GM12878 (cell line): ENCODE measurements at regions of chr2 and their contacts with region 1.

Region 1: DNA sequence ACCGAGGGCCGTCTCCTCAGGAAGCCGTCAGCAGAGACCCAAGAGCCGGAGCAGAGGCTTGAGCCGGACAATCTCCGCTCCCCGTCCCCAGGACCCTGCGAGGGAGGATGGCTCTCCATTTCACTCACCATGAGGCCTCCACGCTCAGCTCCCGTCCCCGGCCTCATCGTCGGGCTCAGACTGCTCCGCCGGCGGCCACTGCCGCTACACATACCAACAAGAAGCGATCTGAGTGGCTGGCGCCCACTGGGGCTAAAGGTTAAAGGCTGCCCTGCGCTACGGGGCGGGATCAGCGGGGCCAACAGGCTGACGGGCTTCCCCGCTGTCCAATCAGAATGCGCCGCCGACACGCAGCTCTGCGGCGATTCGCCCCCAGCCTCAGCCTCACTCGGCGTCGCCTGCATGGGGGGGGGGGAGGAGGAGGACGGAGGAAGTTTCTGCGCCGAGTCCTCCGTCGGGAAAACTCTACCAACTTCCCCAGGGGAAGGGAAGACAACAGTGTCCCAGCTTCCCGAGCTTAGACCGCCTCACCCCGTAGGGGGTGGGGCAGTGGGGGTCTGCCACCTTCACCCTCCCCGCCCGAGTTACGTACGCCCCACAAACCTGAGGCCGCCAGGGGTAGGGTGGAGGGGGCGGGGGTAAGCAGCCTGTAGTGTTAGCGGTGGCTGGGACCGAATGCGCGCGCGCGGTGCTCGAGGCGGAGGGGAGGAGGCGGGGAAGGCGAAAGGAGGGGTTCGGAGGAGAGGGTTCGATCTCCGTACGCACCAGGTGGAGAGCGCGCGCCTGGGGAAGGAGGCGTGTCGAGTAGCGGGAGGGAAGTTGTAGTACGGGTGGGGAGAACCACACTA is at the start of gene PRPF40A:
- DNase-seq: peak; percentile 92
- ATAC-seq: peak; percentile 82
- H3K4me3 ChIP-seq: peak within 1 kb of the TSS; percentile 81
- H3K27ac ChIP-seq: peak within 1 kb of the TSS; percentile 95
- H3K4me1 ChIP-seq: no peaks in the 10 kb centered on the region
- H3K27me3 ChIP-seq: no peaks in the 10 kb centered on the region
- CTCF ChIP-seq: no peak
- EP300 ChIP-seq: peak in 1 of 2 experiments; percentile 16; a peak in 1 of 4 replicates
- POLR2A ChIP-seq: peak; percentile 93
- RAD21 ChIP-seq: no peak
- polyA plus RNA-seq, gene PRPF40A: 97.8 to 117 TPM

Region 2: DNA sequence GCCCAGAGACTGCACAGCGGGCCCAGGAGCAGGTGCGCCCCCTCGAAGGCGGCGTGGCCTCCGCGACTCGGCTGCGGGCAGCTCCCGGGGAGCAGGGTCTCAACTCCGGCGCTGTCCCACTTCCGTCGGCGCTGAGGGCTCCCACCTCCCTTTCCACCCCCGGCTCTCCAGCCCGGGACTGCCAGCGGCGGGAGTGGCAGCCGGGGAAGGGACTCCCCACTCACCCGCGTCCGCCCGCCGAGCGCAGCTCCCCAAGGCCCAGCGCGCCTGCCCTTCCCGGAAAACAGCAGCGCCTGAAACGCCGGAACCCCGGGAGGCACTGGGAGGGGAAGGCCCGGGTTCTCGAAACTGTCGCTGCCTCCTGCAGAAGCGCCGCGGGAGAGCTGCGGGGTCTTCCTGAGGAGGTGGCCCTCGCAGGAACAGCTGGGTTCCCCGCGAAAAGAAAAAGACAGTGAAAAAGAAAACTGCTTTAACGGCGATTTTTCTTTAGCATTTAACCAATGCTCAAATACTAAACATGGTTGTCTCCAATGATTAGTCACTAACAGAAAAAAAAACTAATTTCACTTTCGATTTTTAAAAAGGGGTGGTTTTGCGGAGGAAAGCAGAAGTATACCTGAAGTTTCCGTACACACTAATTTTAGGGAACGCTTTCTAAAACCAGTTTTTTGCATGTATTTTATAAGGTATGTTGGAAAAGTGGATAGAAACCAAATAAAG is 1427.9 kb before region 1 on chr2 and contains the start of gene NMI:
- CTCF ChIA-PET with region 1: no interaction called
- POLR2A ChIA-PET with region 1: no interaction called
- RAD21 ChIA-PET with region 1: no interaction called
- SMC1A ChIA-PET with region 1: no interaction called
- in situ Hi-C with region 1: loop called (anchors 25 kb)
- intact Hi-C with region 1: loop called (anchors 10 kb)
- DNase-seq: peak; percentile 76
- ATAC-seq: peak; percentile 74
- H3K4me3 ChIP-seq: peak within 1 kb of the TSS; percentile 86
- H3K27ac ChIP-seq: peak within 1 kb of the TSS; percentile 98
- H3K4me1 ChIP-seq: peaks cover 4% of the 10 kb centered on the region; the same call in 1 of the 2 replicates
- H3K27me3 ChIP-seq: no peaks in the 10 kb centered on the region
- CTCF ChIP-seq: no peak
- EP300 ChIP-seq: no peak
- POLR2A ChIP-seq: peak; percentile 81
- RAD21 ChIP-seq: no peak
- polyA plus RNA-seq, gene NMI: 43.3 to 48.4 TPM

Region 3: DNA sequence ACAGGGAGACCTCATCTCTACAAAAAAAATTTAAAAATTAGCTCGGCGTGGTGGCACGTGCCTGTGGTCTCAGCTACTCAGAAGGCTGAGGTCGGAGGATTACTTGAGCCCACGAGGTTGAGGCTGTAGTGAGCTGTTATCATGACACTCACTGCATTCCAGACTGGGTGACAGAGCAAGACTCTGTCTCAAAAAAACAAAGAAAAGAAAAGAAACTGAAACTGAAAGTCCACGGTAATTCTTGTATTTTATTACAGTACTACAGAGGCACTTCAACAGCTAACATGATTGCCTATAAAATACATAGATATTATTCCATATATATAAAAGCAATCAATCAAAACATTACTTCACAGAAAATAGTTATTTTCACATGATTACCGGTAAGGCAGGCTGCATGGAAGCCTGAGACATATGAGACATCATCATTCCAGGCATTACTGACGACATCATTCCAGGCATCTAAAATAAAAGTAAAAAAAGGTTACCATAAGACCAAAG is 23.2 kb before region 1 on chr2:
- CTCF ChIA-PET with region 1: interaction called, 31 read pairs
- POLR2A ChIA-PET with region 1: interaction called, 20 read pairs
- RAD21 ChIA-PET with region 1: no interaction called
- SMC1A ChIA-PET with region 1: interaction called, 22 read pairs
- in situ Hi-C with region 1: no loop called
- intact Hi-C with region 1: no loop called
- DNase-seq: no peak
- ATAC-seq: peak; percentile 72
- H3K4me3 ChIP-seq: 0 out of 2 replicates have a peak overlapping the region, but pooled peaks have one; percentile 6
- H3K27ac ChIP-seq: no peak overlapping the region; the same call in 1 of the 2 replicates
- H3K4me1 ChIP-seq: peaks cover 17% of the 10 kb centered on the region; the same call in 1 of the 2 replicates
- H3K27me3 ChIP-seq: no peaks in the 10 kb centered on the region
- CTCF ChIP-seq: no peak
- EP300 ChIP-seq: no peak
- POLR2A ChIP-seq: no peak
- RAD21 ChIP-seq: no peak

Region 4: DNA sequence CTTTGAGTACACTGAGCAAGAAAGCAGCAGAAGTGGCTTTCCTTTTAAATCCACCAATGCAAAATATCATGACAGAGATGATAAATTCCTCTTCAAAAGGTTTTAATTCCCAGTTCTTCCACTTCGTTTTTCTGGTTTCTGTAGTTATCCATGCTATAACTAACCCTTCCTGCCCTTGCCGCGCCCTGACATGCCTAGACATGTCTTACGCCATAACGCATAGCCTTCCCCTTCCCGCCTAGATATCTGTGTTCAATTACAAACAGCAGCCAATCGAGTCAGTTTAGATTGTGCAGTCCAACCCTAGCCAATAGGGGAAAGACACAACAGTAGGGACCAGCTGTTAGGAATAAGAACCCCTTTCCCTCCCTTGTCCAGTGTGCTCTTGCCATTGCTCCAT is 16.3 kb before region 1 on chr2:
- CTCF ChIA-PET with region 1: interaction called, 31 read pairs
- POLR2A ChIA-PET with region 1: interaction called, 20 read pairs
- RAD21 ChIA-PET with region 1: interaction called, 3 read pairs
- SMC1A ChIA-PET with region 1: interaction called, 22 read pairs
- in situ Hi-C with region 1: no loop called
- intact Hi-C with region 1: no loop called
- DNase-seq: no peak
- ATAC-seq: no peak
- H3K4me3 ChIP-seq: no peak overlapping the region
- H3K27ac ChIP-seq: no peak overlapping the region
- H3K4me1 ChIP-seq: no peaks in the 10 kb centered on the region
- H3K27me3 ChIP-seq: no peaks in the 10 kb centered on the region
- CTCF ChIP-seq: no peak
- EP300 ChIP-seq: no peak
- POLR2A ChIP-seq: no peak
- RAD21 ChIP-seq: no peak

Region 5: GRCh38 chr2:152730591-152731303 is 13.3 kb after region 1 on chr2:
- CTCF ChIA-PET with region 1: interaction called, 12 read pairs
- POLR2A ChIA-PET with region 1: interaction called, 10 read pairs
- RAD21 ChIA-PET with region 1: interaction called, 5 read pairs
- SMC1A ChIA-PET with region 1: interaction called, 4 read pairs
- in situ Hi-C with region 1: no loop called
- intact Hi-C with region 1: no loop called
- DNase-seq: no peak
- ATAC-seq: peak; percentile 86
- H3K4me3 ChIP-seq: no peak overlapping the region
- H3K27ac ChIP-seq: no peak overlapping the region
- H3K4me1 ChIP-seq: peaks cover 11% of the 10 kb centered on the region; the same call in 1 of the 2 replicates
- H3K27me3 ChIP-seq: no peaks in the 10 kb centered on the region
- CTCF ChIP-seq: no peak
- EP300 ChIP-seq: no peak
- POLR2A ChIP-seq: no peak
- RAD21 ChIP-seq: no peak

Region 6: GRCh38 chr2:152743002-152743401 is 25.6 kb after region 1 on chr2:
- CTCF ChIA-PET with region 1: interaction called, 58 read pairs
- POLR2A ChIA-PET with region 1: interaction called, 3 read pairs
- RAD21 ChIA-PET with region 1: interaction called, 9 read pairs
- SMC1A ChIA-PET with region 1: interaction called, 28 read pairs
- in situ Hi-C with region 1: no loop called
- intact Hi-C with region 1: no loop called
- DNase-seq: no peak
- ATAC-seq: peak; percentile 86
- H3K4me3 ChIP-seq: no peak overlapping the region
- H3K27ac ChIP-seq: no peak overlapping the region
- H3K4me1 ChIP-seq: no peaks in the 10 kb centered on the region
- H3K27me3 ChIP-seq: no peaks in the 10 kb centered on the region
- CTCF ChIP-seq: peak; percentile 57 to 64 (median 57)
- EP300 ChIP-seq: no peak
- POLR2A ChIP-seq: no peak
- RAD21 ChIP-seq: peak; percentile 64